ENCODE measurements at regions of chr16 and their contacts with region 1.

Region 1: GRCh38 chr16:31142109-31143010 is 6.8 kb upstream of the PRSS8 start:
- DNase-seq: peak; percentile 87 to 98 (median 93)
- ATAC-seq: peak; percentile 86 to 95 (median 90)
- H3K4me3 ChIP-seq: peak overlapping the region; percentile 29 to 34
- H3K4me3 Mint-ChIP-seq: peak overlapping the region; percentile 70 to 76 (median 71)
- H3K27ac ChIP-seq: peak overlapping the region; percentile 43
- H3K27ac Mint-ChIP-seq: peak overlapping the region; percentile 89 to 91
- H3K4me1 ChIP-seq: peaks cover 2 to 22% of the 10 kb centered on the region in 2 experiments
- H3K4me1 Mint-ChIP-seq: peaks cover 11 to 15% (median 12%) of the 10 kb centered on the region in 3 donors
- H3K27me3 ChIP-seq: peaks cover 0 to 7% of the 10 kb centered on the region in 2 experiments
- H3K27me3 Mint-ChIP-seq: peaks cover 3% of the 10 kb centered on the region in 2 donors

Region 2: GRCh38 chr16:30984669-30985400 is 157.5 kb before region 1 on chr16 and contains the start of gene HSD3B7:
- CTCF ChIA-PET with region 1: interaction called in 1 of 2 experiments, 19 read pairs
- POLR2A ChIA-PET with region 1: no interaction called
- DNase-seq: peak; percentile 25 to 83 (median 70)
- ATAC-seq: peak; percentile 70 to 80 (median 77)
- H3K4me3 ChIP-seq: no peak within 1 kb of the TSS
- H3K4me3 Mint-ChIP-seq: no peak within 1 kb of the TSS
- H3K27ac ChIP-seq: no peak within 1 kb of the TSS
- H3K27ac Mint-ChIP-seq: no peak within 1 kb of the TSS
- H3K4me1 ChIP-seq: peaks cover 0 to 9% of the 10 kb centered on the region in 2 experiments
- H3K4me1 Mint-ChIP-seq: peaks cover 0 to 1% (median 0%) of the 10 kb centered on the region in 3 donors
- H3K27me3 ChIP-seq: no peaks in the 10 kb centered on the region
- H3K27me3 Mint-ChIP-seq: no peaks in the 10 kb centered on the region
- total RNA-seq, gene HSD3B7: 0.33 to 3.5 (median 1.3) TPM

Region 3: DNA sequence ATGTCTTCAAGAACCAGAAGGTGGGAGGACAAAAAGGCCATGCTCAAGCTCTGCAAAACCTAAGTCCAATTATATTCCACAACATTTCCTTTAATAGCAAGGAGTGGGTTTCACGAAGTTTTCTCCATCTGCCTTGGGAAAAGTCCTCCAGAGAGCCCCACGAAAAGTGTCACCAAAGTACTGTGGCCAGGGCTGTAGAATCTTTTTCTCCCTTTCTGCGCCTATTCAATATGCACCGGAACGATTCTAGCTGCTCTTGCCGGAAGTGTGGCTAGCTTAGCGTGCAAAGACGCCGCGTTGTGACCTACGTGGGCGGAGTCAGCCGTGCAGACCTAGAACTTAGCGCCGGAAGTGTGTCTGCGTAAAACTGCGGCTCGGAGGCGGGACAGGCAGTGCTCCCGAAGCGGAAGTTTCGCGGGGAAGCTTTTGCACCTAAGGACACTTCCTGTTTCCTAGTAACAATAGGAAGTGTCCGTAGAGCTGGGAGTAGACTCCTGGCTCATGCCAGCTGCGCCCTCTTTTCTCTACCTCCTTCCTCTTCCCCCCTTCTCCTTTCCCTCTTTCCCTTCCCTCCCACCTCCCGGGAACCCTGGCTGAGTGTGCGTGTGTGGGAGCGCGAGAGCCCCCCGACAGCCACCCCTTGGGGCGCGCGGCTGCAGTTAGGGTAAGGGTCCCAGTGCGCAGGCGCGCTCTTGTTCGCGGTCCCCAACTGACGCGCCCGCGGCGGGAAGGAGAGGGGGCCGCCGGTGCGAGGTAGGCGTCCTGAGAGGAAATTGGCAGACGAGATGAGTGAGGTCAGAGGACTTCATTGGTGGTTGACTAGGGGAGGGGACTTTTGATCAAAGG is 68.2 kb before region 1 on chr16 and contains the starts of genes ZNF646 and ZNF668:
- CTCF ChIA-PET with region 1: interaction called in 1 of 2 experiments, 15 read pairs
- POLR2A ChIA-PET with region 1: interaction called in 1 of 2 experiments, 4 read pairs
- DNase-seq: peak; percentile 89 to 99 (median 98)
- ATAC-seq: peak; percentile 85 to 88 (median 86)
- H3K4me3 ChIP-seq: peak within 1 kb of the TSS; percentile 69 to 95
- H3K4me3 Mint-ChIP-seq: peak within 1 kb of the TSS; percentile 92 to 96 (median 94)
- H3K27ac ChIP-seq: peak within 1 kb of the TSS; percentile 89
- H3K27ac Mint-ChIP-seq: peak within 1 kb of the TSS; percentile 95 to 97
- H3K4me1 ChIP-seq: peaks cover 14 to 34% of the 10 kb centered on the region in 2 experiments
- H3K4me1 Mint-ChIP-seq: peaks cover 39 to 47% (median 46%) of the 10 kb centered on the region in 3 donors
- H3K27me3 ChIP-seq: no peaks in the 10 kb centered on the region
- H3K27me3 Mint-ChIP-seq: no peaks in the 10 kb centered on the region
- total RNA-seq, gene ZNF646: 21.1 to 47.7 (median 44.1) TPM
- total RNA-seq, gene ZNF668: 12.3 to 14.4 (median 14.3) TPM

Region 4: DNA sequence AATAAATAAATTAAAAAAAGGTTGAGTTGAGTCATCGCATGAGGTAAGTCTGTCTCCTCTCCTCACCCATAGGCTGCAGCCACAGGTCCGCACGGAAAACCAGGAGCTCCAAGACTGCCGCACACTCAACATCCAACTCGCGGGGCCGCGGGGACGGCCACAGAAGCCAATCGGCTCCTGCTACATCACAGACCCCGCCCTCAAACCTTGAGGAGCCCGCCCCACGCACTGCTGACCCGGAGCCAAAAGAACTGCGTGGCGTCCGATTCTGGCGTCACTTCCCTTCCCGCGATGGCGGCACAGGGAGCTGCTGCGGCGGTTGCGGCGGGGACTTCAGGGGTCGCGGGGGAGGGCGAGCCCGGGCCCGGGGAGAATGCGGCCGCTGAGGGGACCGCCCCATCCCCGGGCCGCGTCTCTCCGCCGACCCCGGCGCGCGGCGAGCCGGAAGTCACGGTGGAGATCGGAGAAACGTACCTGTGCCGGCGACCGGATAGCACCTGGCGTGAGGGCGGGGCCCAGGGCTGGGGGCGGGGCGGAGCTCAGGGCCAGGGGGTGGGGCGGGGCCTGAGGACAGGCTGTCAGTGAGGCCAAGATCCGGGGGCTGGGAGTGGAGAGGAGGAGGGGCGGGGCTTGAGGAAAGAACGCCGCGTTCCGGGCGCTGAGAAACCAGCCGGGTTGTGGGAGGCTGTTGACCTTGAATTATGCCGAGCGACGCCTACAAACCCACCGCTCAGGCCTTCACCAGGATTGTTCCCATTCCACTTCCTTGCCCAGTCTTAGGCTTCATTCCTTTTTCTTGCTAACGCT is 24.8 kb before region 1 on chr16 and contains the start of gene KAT8:
- CTCF ChIA-PET with region 1: interaction called, 4 to 28 read pairs
- POLR2A ChIA-PET with region 1: interaction called, 3 to 15 read pairs
- DNase-seq: peak; percentile 93 to 98 (median 96)
- ATAC-seq: peak; percentile 92 to 97 (median 95)
- H3K4me3 ChIP-seq: peak within 1 kb of the TSS; percentile 55 to 61
- H3K4me3 Mint-ChIP-seq: peak within 1 kb of the TSS; percentile 81 to 89 (median 88)
- H3K27ac ChIP-seq: peak within 1 kb of the TSS; percentile 68
- H3K27ac Mint-ChIP-seq: peak within 1 kb of the TSS; percentile 91 to 93
- H3K4me1 ChIP-seq: peaks cover 6 to 23% of the 10 kb centered on the region in 2 experiments
- H3K4me1 Mint-ChIP-seq: peaks cover 15 to 21% (median 21%) of the 10 kb centered on the region in 3 donors
- H3K27me3 ChIP-seq: no peaks in the 10 kb centered on the region
- H3K27me3 Mint-ChIP-seq: no peaks in the 10 kb centered on the region
- total RNA-seq, gene KAT8: 92.3 to 122 (median 102) TPM

Region 5: GRCh38 chr16:31157136-31157535 is 14.8 kb after region 1 on chr16:
- CTCF ChIA-PET with region 1: interaction called, 5 to 11 read pairs
- POLR2A ChIA-PET with region 1: no interaction called
- DNase-seq: no peak
- ATAC-seq: peak in 1 of 4 experiments; percentile 44
- H3K4me3 ChIP-seq: no peak overlapping the region
- H3K4me3 Mint-ChIP-seq: peak overlapping the region in 1 of 3 donors; percentile 48
- H3K27ac ChIP-seq: no peak overlapping the region
- H3K27ac Mint-ChIP-seq: peak overlapping the region in 1 of 2 donors; percentile 44
- H3K4me1 ChIP-seq: peaks cover 0 to 6% of the 10 kb centered on the region in 2 experiments
- H3K4me1 Mint-ChIP-seq: peaks cover 6 to 11% (median 9%) of the 10 kb centered on the region in 3 donors
- H3K27me3 ChIP-seq: peaks cover 0 to 10% of the 10 kb centered on the region in 2 experiments
- H3K27me3 Mint-ChIP-seq: no peaks in the 10 kb centered on the region

Region 6: DNA sequence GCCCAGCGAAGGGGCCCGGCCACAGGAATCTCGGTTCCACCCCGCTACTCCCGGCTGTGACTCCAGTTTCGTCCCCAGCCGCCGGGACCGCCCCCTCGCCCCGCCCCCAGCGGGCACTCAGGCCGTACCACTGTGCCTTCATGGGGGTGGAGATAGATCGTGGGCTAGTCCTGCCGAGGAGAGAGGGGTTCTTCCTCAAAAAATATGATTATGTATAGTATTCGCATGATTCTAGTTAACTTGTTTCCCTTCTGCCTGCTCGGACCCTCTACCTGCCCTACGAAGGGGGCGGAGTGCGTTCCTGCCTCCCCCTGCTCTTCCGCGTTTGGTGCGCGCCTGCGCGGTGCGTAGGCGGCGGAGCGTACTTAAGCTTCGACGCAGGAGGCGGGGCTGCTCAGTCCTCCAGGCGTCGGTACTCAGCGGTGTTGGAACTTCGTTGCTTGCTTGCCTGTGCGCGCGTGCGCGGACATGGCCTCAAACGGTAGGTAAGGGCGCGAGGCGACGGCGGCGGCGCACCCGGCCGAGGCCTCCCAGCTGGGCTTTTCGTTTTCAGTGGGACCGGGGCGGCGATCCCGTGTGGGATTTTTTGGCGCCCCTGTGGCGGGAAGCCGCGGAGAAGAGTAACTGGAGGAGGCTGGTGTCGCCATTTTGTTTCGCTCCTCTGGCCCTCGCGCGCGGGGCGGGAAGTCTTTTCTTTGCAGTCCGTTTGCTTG is 37.5 kb after region 1 on chr16 and contains the start of gene FUS:
- CTCF ChIA-PET with region 1: interaction called in 1 of 2 experiments, 15 read pairs
- POLR2A ChIA-PET with region 1: interaction called, 8 read pairs
- DNase-seq: peak; percentile 78 to 98 (median 89)
- ATAC-seq: peak; percentile 64 to 79 (median 69)
- H3K4me3 ChIP-seq: peak within 1 kb of the TSS; percentile 90 to 92
- H3K4me3 Mint-ChIP-seq: peak within 1 kb of the TSS; percentile 97 to 98 (median 98)
- H3K27ac ChIP-seq: peak within 1 kb of the TSS; percentile 89
- H3K27ac Mint-ChIP-seq: peak within 1 kb of the TSS; percentile 99
- H3K4me1 ChIP-seq: peaks cover 48 to 70% of the 10 kb centered on the region in 2 experiments
- H3K4me1 Mint-ChIP-seq: peaks cover 58 to 70% (median 65%) of the 10 kb centered on the region in 3 donors
- H3K27me3 ChIP-seq: no peaks in the 10 kb centered on the region
- H3K27me3 Mint-ChIP-seq: peaks cover 0 to 2% of the 10 kb centered on the region in 2 donors
- total RNA-seq, gene FUS: 410 to 963 (median 434) TPM

Measured in T-cell (primary cell).